Activated T-helper 2 cell treated with anti-CD3 and anti-CD28 coated beads, Interferon-gamma antibody, Interleukin-2, Interleukin-4, amounts not matched to agents 10 μg/mL and 5 μg/mL and 100 μg/mL, durations not matched to agents 14 hours and 24 hours and 36 hours (primary cell): ENCODE measurements at regions of chr18 and their contacts with region 1.

Region 1: DNA sequence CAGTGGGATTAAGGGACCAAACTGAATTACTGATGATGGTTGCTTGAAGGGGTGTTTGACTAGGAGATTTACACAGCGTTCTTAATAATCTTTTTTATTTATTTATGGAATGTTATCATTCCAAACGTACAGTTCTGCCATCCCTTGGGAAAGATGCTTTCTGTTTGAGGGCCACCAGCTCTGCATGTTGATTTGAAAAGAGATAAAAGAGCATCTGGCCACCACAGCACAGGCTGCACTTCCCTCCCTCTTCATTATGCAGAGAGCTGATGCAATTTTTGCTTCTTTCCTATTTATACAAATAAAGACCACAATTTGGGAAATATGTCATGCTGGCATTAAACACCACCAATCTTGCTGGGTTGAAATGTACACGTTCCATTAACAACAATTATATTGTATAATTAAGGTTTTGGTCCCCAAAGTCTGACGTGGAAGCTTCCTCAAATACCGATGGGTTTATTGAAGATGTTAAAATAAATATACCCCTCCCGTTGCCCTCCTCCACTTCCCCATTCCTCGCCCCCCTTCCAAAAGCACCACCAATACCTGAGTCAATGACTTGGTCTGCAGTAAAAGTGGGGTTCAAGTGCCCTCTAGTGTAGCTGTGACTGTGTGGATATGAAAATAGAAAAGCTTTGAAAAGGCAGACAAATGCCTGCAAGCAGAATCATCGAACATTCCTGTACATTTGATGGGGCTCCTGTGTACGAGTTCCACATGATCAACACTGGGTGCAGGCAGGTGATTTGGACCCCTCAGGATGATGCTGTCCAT is 211.9 kb downstream of the HRH4 start:
- DNase-seq: no peak
- H3K4me3 Mint-ChIP-seq: no peak overlapping the region
- H3K27ac Mint-ChIP-seq: no peak overlapping the region
- H3K4me1 Mint-ChIP-seq: peaks cover 25% of the 10 kb centered on the region
- H3K27me3 Mint-ChIP-seq: no peaks in the 10 kb centered on the region

Region 2: GRCh38 chr18:22822024-22822423 is 1850.3 kb before region 1 on chr18:
- intact Hi-C with region 1: no loop called
- DNase-seq: no peak
- H3K4me3 Mint-ChIP-seq: no peak overlapping the region
- H3K27ac Mint-ChIP-seq: no peak overlapping the region
- H3K4me1 Mint-ChIP-seq: no peaks in the 10 kb centered on the region
- H3K27me3 Mint-ChIP-seq: peaks cover 27% of the 10 kb centered on the region

Region 3: DNA sequence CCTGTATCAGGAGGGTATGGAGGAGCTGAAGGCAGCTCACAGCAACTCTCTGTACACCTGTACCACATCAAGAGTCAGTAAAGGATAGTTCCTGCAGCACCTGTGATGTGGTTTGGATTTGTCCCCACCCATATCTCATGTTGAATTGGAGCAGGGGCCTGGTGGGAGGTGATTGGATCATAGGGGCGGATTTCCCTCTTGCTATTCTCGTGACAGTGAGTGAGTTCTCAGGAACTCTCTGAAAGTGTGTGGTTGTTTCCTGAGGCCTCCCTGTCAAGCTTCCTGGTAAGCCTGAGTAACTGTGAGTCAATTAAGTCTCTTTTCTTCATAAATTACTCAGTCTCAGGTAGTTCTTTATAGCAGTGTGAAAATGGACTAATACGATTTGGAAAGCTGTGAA is 303.6 kb before region 1 on chr18:
- intact Hi-C with region 1: loop called (anchors 2 kb)
- DNase-seq: no peak
- H3K4me3 Mint-ChIP-seq: no peak overlapping the region
- H3K27ac Mint-ChIP-seq: no peak overlapping the region
- H3K4me1 Mint-ChIP-seq: peaks cover 25% of the 10 kb centered on the region
- H3K27me3 Mint-ChIP-seq: peaks cover 25% of the 10 kb centered on the region

Region 4: DNA sequence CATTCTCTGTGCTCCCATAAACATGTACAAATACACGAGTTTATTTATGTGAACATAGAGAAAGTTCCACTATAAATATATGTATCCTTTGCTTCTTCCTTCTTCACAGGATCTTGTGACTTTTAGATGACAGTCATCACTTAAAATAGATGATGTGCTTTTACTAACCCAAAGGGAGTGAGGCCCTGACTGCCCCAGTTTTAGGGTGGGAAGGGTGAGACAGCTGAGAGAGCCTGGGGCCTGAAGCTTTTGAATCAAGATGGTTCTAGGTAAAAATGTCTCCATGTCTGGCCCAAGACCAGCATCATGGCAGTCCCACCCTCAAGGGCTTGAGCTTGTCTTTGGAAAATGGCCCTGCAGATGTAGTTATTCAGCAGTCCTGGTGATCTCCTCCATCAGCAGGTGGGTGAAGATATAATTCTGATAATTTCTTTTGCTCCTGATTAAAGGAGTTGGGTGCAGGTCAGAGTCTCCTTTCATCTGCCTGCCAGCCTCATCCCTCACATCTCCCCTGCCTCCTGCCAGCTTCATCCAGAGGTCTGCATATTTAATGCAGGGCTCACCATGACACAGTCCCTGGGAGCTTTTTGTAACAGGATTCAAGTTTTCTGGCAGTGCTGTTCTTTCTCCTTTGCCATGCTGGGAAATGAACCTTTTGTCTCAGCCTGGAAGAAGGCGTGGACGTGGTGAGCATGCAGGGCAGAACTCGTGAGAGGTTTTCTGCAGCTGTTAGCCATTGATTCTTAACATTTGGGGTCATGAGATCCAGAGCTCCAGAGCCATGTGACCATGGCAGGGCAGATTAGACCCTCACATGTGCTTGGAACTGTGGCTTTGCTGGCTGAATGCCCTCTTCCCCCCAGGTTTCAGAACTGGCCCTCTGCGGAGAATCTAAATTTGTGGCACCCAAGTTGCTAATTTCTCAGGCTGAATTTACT is 209.2 kb before region 1 on chr18:
- intact Hi-C with region 1: loop called (anchors 10 kb)
- DNase-seq: no peak
- H3K4me3 Mint-ChIP-seq: no peak overlapping the region
- H3K27ac Mint-ChIP-seq: no peak overlapping the region
- H3K4me1 Mint-ChIP-seq: peaks cover 55% of the 10 kb centered on the region
- H3K27me3 Mint-ChIP-seq: peaks cover 34% of the 10 kb centered on the region

Region 5: GRCh38 chr18:24582771-24583170 is 89.6 kb before region 1 on chr18:
- intact Hi-C with region 1: no loop called
- DNase-seq: no peak
- H3K4me3 Mint-ChIP-seq: no peak overlapping the region
- H3K27ac Mint-ChIP-seq: no peak overlapping the region
- H3K4me1 Mint-ChIP-seq: no peaks in the 10 kb centered on the region
- H3K27me3 Mint-ChIP-seq: peaks cover 12% of the 10 kb centered on the region

Region 6: GRCh38 chr18:24600076-24600654 is 72.2 kb before region 1 on chr18:
- intact Hi-C with region 1: loop called (anchors 10 kb)
- DNase-seq: no peak
- H3K4me3 Mint-ChIP-seq: no peak overlapping the region
- H3K27ac Mint-ChIP-seq: no peak overlapping the region
- H3K4me1 Mint-ChIP-seq: no peaks in the 10 kb centered on the region
- H3K27me3 Mint-ChIP-seq: peaks cover 14% of the 10 kb centered on the region

Region 7: GRCh38 chr18:24659827-24660720 is 12.3 kb before region 1 on chr18:
- intact Hi-C with region 1: loop called (anchors 2 kb)
- DNase-seq: peak; percentile 19
- H3K4me3 Mint-ChIP-seq: peak overlapping the region; percentile 65
- H3K27ac Mint-ChIP-seq: no peak overlapping the region
- H3K4me1 Mint-ChIP-seq: peaks cover 14% of the 10 kb centered on the region
- H3K27me3 Mint-ChIP-seq: peaks cover 11% of the 10 kb centered on the region

Region 8: DNA sequence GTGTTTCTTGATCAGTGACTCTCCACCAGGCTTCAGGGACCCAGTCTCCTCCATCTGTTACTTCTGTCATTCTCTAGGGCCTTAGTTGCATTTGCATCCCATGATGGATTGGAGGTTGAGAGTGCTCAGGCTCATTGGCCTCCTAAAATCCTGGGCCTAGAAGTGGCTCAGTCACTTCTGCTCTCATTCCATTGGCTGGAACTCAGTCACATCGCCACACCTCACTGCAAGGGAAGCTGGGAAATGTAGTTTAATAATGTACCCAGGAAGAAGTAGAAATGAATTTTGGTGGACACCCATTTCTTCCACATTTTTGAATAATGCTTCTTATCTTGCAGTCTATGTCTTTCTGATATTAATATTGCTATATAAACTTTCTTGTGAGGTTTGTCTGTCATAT is 11.6 kb after region 1 on chr18:
- intact Hi-C with region 1: loop called (anchors 1 kb)
- DNase-seq: no peak
- H3K4me3 Mint-ChIP-seq: no peak overlapping the region
- H3K27ac Mint-ChIP-seq: no peak overlapping the region
- H3K4me1 Mint-ChIP-seq: peaks cover 9% of the 10 kb centered on the region
- H3K27me3 Mint-ChIP-seq: no peaks in the 10 kb centered on the region

Region 9: DNA sequence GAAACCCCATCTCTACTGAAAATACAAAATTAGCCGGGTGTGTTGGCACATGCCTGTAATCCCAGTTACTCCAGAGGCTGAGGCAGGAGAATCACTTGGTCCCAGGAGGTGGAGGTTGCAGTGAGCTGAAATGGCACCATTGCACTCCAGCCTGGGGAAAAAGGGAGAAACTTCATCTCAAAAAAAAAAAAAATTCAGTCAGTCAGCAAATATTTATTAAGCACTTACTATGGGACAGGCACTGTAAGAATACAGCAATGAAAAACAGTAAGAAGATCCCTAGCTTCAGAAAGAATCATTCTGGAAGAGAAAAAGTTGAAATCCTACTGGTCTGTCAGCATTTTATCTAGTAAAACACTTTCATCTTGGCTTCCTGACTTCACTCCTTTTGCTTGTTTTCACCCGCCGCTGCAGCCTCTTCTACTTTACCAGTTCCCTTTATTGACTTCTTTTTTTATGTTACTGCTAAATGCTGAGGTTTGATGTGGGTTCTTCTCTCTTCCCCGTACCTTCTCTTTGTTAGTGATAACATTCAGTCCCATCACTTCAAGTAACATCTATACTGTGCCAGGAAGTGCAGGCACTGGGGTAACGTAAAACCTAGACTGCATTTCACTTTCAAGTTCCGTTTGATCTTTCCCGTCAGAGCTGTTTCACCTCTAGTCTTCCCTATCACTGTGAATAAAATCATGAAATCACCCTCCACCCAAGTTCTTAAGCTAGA is 1543.1 kb after region 1 on chr18:
- intact Hi-C with region 1: loop called (anchors 5 kb)
- DNase-seq: peak; percentile 44
- H3K4me3 Mint-ChIP-seq: peak overlapping the region; percentile 80
- H3K27ac Mint-ChIP-seq: peak overlapping the region; percentile 95
- H3K4me1 Mint-ChIP-seq: peaks cover 15% of the 10 kb centered on the region
- H3K27me3 Mint-ChIP-seq: no peaks in the 10 kb centered on the region